ENCODE measurements at regions of chr22 and their contacts with region 1.

Region 1: GRCh38 chr22:37965940-37966664 is 12.6 kb downstream of the POLR2F start:
- DNase-seq: no peak
- ATAC-seq: no peak
- H3K4me3 ChIP-seq: no peak overlapping the region
- H3K4me3 Mint-ChIP-seq: no peak overlapping the region
- H3K27ac ChIP-seq: no peak overlapping the region
- H3K27ac Mint-ChIP-seq: no peak overlapping the region
- H3K4me1 ChIP-seq: no peaks in the 10 kb centered on the region
- H3K4me1 Mint-ChIP-seq: peaks cover 3 to 9% (median 4%) of the 10 kb centered on the region in 3 donors
- H3K27me3 ChIP-seq: no peaks in the 10 kb centered on the region
- H3K27me3 Mint-ChIP-seq: no peaks in the 10 kb centered on the region

Region 2: DNA sequence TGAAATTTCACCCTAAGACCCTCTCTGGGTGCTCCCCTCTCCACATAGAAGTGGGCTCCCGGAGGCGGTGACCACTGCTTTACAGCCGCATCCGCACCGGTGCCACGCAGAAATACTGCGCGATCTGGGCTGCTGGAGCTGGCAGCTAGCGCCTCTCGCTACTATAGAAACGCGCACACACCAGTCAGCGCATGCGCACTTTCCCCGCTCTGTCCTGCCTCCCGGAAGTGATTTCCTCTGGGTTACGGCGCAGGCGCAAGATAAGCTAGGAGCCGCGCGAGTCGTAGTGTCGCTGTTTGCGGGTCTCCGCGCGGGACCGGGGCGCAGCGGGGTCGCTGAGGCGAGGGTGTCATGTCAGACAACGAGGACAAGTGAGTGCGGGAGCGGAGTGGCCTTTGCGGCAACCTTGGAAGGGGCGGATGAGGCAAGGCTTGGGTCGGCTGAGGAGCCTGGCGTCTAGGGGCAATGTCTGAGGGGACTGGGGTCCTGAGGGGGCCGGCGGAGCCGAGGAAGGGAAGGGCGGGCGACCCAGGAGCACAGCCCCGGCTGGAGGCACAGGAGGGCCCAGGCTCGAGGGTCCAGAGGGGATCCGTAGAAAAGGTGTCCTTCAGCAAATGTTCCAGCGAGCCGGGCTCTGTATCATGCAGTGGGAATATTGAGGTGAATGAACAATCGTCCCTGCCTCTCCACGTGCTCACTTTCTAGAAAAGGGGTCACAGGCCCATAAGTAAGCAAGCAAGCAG is 12.5 kb before region 1 on chr22 and contains the starts of genes C22orf23 and POLR2F:
- CTCF ChIA-PET with region 1: interaction called in 1 of 2 experiments, 13 read pairs
- POLR2A ChIA-PET with region 1: no interaction called
- DNase-seq: peak; percentile 90 to 99 (median 95)
- ATAC-seq: peak; percentile 92 to 96 (median 95)
- H3K4me3 ChIP-seq: peak within 1 kb of the TSS; percentile 93 to 97
- H3K4me3 Mint-ChIP-seq: peak within 1 kb of the TSS; percentile 92 to 99 (median 99)
- H3K27ac ChIP-seq: peak within 1 kb of the TSS; percentile 6
- H3K27ac Mint-ChIP-seq: peak within 1 kb of the TSS; percentile 95 to 97
- H3K4me1 ChIP-seq: peaks cover 6 to 20% of the 10 kb centered on the region in 2 experiments
- H3K4me1 Mint-ChIP-seq: peaks cover 45 to 48% (median 45%) of the 10 kb centered on the region in 3 donors
- H3K27me3 ChIP-seq: peaks cover 0 to 18% of the 10 kb centered on the region in 2 experiments
- H3K27me3 Mint-ChIP-seq: peaks cover 3 to 17% of the 10 kb centered on the region in 2 donors
- total RNA-seq, gene C22orf23: not detected
- total RNA-seq, gene POLR2F: 31.4 to 54.5 (median 49.4) TPM